ENCODE measurements at regions of chr4 and their contacts with region 1.

Region 1: DNA sequence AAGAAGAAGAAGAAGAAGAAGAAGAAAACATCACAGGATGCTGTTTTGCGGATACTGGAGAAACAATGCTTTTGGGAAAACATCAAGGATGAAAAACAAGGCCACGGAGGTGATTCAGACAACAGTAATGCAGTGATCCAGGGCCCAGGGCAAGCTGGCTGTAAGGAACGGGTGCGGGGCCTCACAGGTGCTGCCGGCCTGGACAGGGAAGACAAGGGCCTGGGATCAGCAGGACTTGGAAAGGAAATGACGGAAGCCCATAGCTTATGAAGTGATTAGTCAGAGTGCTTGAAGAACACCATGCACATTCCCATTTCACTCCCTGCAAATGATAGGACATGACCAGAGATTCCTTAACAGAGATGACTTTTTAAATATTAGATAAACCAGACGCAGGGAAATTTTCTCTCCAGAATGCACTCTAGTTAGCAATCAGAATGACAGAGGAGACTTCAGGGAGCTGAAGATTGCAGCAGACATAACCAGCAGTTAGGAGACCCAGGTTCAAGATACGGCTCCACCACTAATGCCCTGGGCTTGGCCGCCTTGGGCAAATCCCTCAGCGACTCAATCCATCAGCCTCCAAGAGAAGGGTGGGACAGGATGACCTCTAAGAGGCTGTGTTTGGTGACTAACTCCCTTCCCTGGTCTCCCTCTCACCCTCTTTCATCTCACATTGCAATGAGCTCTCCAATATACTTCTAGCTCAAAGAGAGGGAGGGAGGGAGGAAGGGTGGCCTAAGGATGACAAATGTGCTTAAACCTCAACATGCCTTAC is 54.1 kb downstream of the APBB2 start:
- DNase-seq: peak; percentile 97
- H3K4me3 Mint-ChIP-seq: peak overlapping the region; percentile 61
- H3K27ac Mint-ChIP-seq: peak overlapping the region; percentile 94
- H3K4me1 Mint-ChIP-seq: peaks cover 62% of the 10 kb centered on the region
- H3K27me3 Mint-ChIP-seq: no peaks in the 10 kb centered on the region
- CTCF ChIP-seq: no peak

Region 2: DNA sequence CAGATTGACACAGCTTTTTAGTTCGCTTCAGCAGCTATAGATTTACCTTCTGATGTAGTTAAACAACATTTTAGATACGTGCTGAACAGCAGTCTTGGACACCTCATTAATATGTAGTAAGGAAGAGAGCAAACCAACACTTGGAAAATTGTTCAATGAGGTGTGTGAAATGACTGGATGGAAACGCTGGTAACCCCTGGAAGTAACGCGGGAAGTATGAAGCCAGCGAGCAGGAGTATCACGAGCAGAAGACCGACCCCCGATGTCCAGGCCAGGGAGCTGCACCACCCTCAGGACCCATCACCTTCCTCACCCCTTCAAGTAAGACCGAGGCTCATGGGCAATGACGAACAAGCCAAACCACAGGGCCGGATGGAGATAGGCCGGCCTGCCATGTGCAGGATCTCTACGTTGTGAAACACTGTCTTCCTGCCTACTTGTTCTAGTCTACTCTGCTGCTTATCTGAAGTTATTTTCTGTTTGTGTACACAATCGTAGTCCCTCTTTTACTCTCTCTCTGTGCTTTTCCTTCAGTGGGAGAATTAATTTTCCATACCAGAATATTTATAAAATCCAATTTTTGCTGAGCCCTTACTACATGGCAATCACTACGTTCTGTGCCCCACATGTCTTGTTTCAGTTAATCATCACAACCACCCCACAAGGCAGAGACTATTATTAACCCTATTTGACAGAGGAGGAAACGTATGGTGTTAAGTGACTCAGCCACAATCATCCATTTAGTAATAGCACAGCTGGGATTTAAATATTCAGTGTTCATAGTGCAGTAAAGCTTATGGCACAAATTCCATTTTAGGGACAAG is 167.5 kb before region 1 on chr4:
- CTCF ChIA-PET with region 1: no interaction called
- POLR2A ChIA-PET with region 1: interaction called, 10 read pairs
- intact Hi-C with region 1: no loop called
- DNase-seq: peak; percentile 75
- H3K4me3 Mint-ChIP-seq: peak overlapping the region; percentile 43
- H3K27ac Mint-ChIP-seq: peak overlapping the region; percentile 80
- H3K4me1 Mint-ChIP-seq: peaks cover 63% of the 10 kb centered on the region
- H3K27me3 Mint-ChIP-seq: no peaks in the 10 kb centered on the region
- CTCF ChIP-seq: no peak

Region 3: GRCh38 chr4:41133454-41134018 is 26.7 kb before region 1 on chr4:
- CTCF ChIA-PET with region 1: interaction called, 4 read pairs
- POLR2A ChIA-PET with region 1: interaction called, 99 read pairs
- intact Hi-C with region 1: no loop called
- DNase-seq: no peak
- H3K4me3 Mint-ChIP-seq: no peak overlapping the region
- H3K27ac Mint-ChIP-seq: peak overlapping the region; percentile 82
- H3K4me1 Mint-ChIP-seq: peaks cover 54% of the 10 kb centered on the region
- H3K27me3 Mint-ChIP-seq: no peaks in the 10 kb centered on the region
- CTCF ChIP-seq: no peak

Region 4: DNA sequence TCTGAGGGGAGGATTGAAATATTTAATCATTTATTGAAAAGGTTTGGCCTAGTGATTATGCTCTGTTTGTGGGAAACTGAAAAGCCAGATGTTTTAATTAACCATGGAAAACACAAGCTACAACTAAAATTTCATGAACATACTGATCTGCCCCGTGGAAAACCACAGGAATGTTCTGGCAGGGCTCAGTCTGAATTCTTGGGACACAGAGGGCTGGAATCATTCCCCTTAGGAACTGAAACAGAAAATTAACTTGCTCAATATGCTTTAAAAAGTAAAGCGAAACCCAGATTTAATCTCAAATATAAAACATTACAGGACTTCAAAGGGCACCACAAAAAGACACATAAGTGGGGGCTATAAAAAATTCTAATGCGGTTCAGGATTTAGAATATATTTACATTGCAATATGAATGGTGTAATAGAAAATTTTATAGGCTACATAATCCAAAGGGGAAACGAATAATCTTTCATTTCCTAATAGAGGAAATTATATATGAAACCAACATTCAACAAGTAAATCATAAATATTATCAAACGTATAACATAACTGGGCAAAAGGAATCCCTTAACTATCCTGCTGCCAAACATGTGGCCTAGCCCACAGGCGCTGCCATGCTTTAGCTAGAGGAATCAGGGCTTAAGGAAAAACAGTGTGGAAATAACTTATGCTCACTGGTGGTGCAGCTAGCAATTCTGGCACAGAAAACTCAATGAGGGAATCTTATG is 16.7 kb before region 1 on chr4:
- CTCF ChIA-PET with region 1: interaction called, 9 read pairs
- POLR2A ChIA-PET with region 1: interaction called, 163 read pairs
- intact Hi-C with region 1: loop called (anchors 2 kb)
- DNase-seq: peak; percentile 90
- H3K4me3 Mint-ChIP-seq: peak overlapping the region; percentile 56
- H3K27ac Mint-ChIP-seq: peak overlapping the region; percentile 93
- H3K4me1 Mint-ChIP-seq: peaks cover 56% of the 10 kb centered on the region
- H3K27me3 Mint-ChIP-seq: no peaks in the 10 kb centered on the region
- CTCF ChIP-seq: no peak

Region 5: GRCh38 chr4:41177016-41177415 is 16.8 kb after region 1 on chr4:
- CTCF ChIA-PET with region 1: interaction called, 18 read pairs
- POLR2A ChIA-PET with region 1: interaction called, 156 read pairs
- intact Hi-C with region 1: loop called (anchors 2 kb)
- DNase-seq: peak; percentile 69
- H3K4me3 Mint-ChIP-seq: no peak overlapping the region
- H3K27ac Mint-ChIP-seq: peak overlapping the region; percentile 95
- H3K4me1 Mint-ChIP-seq: peaks cover 51% of the 10 kb centered on the region
- H3K27me3 Mint-ChIP-seq: no peaks in the 10 kb centered on the region
- CTCF ChIP-seq: peak; percentile 19

Region 6: DNA sequence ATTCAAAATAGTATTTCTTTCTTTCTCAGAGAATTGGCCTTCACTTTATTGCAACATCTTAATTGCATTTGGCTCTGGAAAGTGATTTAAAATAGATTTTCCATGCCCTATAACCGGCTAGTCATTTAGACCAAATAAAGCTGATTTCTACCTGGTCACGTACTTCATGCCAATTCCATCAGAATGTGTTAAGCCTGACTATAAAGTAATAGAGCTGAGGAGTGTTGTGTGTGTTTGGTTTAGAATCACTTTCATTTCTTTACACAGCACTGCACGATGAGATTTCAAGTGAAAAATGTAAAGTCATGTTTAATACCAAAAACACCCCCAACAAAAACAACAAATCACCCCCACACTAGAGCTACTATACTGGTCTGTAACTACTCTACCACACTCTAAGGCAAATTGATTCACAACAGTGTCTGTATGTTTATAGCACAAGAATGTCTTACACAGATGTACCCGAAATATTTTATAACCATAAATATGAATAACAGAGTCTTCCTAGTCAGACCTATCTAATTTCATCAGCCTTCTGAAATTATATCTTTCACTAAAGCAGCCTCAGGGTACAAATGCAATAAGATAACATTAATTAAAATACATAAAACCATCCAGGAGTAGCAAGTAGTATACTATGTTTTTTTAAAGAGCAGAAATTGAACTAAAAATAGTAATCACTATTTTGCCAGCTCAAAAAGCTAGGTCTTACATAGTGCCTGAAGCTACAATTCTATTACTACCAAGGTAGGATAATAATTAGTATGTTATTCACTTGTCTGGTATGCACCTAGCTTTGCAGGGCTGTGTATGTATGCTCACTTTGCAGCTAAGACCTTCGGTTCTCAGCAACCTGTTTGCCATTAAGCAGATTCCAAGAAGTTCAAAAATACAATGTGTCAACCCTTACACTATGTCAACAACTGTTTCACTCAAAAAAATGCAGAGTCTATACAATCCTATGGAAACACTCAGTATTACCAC is 25.7 kb after region 1 on chr4:
- CTCF ChIA-PET with region 1: interaction called, 3 read pairs
- POLR2A ChIA-PET with region 1: interaction called, 63 read pairs
- intact Hi-C with region 1: no loop called
- DNase-seq: peak; percentile 46
- H3K4me3 Mint-ChIP-seq: peak overlapping the region; percentile 49
- H3K27ac Mint-ChIP-seq: peak overlapping the region; percentile 76
- H3K4me1 Mint-ChIP-seq: peaks cover 64% of the 10 kb centered on the region
- H3K27me3 Mint-ChIP-seq: no peaks in the 10 kb centered on the region
- CTCF ChIP-seq: no peak

Region 7: GRCh38 chr4:41204400-41204978 is 44.3 kb after region 1 on chr4:
- CTCF ChIA-PET with region 1: interaction called, 7 read pairs
- POLR2A ChIA-PET with region 1: interaction called, 15 read pairs
- intact Hi-C with region 1: no loop called
- DNase-seq: peak; percentile 80
- H3K4me3 Mint-ChIP-seq: peak overlapping the region; percentile 6
- H3K27ac Mint-ChIP-seq: peak overlapping the region; percentile 83
- H3K4me1 Mint-ChIP-seq: peaks cover 85% of the 10 kb centered on the region
- H3K27me3 Mint-ChIP-seq: no peaks in the 10 kb centered on the region
- CTCF ChIP-seq: no peak